ENCODE measurements at regions of chr10 and their contacts with region 1.

Region 1: DNA sequence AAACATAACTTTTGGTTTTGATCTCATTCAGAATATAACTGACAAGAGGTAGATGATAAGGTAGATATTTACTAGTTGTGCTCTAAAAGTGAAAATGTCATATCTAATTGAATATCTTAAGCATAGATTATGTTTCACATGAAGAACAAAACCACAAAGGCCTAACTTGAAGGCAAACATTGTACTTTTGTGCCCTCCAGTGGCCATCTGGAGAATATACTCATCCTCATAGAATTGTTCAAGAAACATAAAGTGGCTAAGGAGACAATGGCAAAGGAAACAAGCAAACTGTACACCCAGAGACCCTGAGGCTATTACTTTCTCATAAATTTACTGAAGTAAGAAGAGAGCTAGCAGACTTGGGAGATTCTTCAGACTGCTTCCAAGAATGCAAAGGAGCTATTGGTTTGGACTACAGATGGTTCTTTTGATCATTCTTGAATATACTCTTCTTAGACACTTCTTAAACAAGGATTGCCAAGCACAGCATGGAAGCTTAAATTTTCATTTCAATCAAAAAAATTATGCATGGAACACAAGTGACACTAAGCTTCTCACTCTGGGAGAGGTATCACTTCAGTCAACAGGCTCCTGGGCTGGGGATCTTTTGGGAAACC is 98.2 kb upstream of the DKK1 start:
- DNase-seq: no peak
- H3K4me3 ChIP-seq: no peak overlapping the region
- H3K27ac ChIP-seq: no peak overlapping the region
- H3K4me1 ChIP-seq: no peaks in the 10 kb centered on the region
- H3K27me3 ChIP-seq: no peaks in the 10 kb centered on the region
- CTCF ChIP-seq: peak; percentile 32 to 79 (median 66)
- POLR2A ChIP-seq: no peak

Region 2: DNA sequence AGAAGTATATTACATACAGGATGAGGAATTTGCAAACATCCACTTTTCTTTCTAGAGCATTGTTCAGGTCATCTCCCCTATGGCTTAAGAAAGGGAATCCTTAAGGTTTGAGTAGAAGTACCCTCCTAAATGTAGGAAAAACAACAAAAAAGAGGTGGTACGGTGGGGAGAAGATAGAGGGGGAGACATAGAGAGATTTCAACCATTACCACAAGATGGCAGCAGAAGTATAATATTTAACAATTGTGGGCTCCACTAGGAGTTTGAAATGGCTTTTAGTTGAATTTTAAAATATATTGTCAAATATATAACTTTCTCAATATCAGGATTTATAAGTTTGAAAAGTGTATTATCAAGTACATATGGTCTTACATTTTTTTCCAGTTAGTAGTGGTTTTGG is 1214.3 kb before region 1 on chr10:
- intact Hi-C with region 1: loop called (anchors 10 kb)
- DNase-seq: no peak
- H3K4me3 ChIP-seq: no peak overlapping the region
- H3K27ac ChIP-seq: no peak overlapping the region
- H3K4me1 ChIP-seq: peaks cover 0 to 2% (median 0%) of the 10 kb centered on the region in 3 donors
- H3K27me3 ChIP-seq: no peaks in the 10 kb centered on the region
- CTCF ChIP-seq: peak; percentile 19 to 52 (median 34)
- POLR2A ChIP-seq: no peak